HepG2 (cell line): ENCODE measurements at regions of chr2 and their contacts with region 1.

Region 1: GRCh38 chr2:38665854-38666555 is at the start of gene GALM:
- DNase-seq: peak; percentile 99
- ATAC-seq: peak; percentile 94
- H3K4me3 ChIP-seq: peak within 1 kb of the TSS; percentile 70 to 90 (median 85)
- H3K27ac ChIP-seq: peak within 1 kb of the TSS; percentile 88
- H3K4me1 ChIP-seq: peaks cover 52% of the 10 kb centered on the region
- H3K27me3 ChIP-seq: no peaks in the 10 kb centered on the region; a peak in 1 of 5 replicates
- CTCF ChIP-seq: 0 out of 2 replicates have a peak, but pooled peaks have one; percentile 15
- EP300 ChIP-seq: peak in 1 of 2 experiments; percentile 24; a peak in 2 of 4 replicates
- POLR2A ChIP-seq: peak; percentile 93 to 99
- RAD21 ChIP-seq: no peak
- total RNA-seq, gene GALM: 90.0 and 114 TPM in 2 replicates

Region 2: GRCh38 chr2:38610851-38611801 is 54.9 kb before region 1 on chr2:
- CTCF ChIA-PET with region 1: no interaction called
- POLR2A ChIA-PET with region 1: interaction called, 24 read pairs
- in situ Hi-C with region 1: no loop called
- intact Hi-C with region 1: no loop called
- DNase-seq: peak; percentile 95
- ATAC-seq: peak; percentile 93
- H3K4me3 ChIP-seq: peak overlapping the region in 1 of 3 experiments; percentile 17; a peak in 1 of 6 replicates
- H3K27ac ChIP-seq: peak overlapping the region; percentile 73
- H3K4me1 ChIP-seq: peaks cover 80% of the 10 kb centered on the region
- H3K27me3 ChIP-seq: no peaks in the 10 kb centered on the region
- CTCF ChIP-seq: 0 out of 2 replicates have a peak, but pooled peaks have one; percentile 5
- EP300 ChIP-seq: peak; percentile 35 to 95; a peak in 2 of 4 replicates
- POLR2A ChIP-seq: peak in 1 of 2 experiments; percentile 33; a peak in 1 of 4 replicates
- RAD21 ChIP-seq: no peak

Region 3: DNA sequence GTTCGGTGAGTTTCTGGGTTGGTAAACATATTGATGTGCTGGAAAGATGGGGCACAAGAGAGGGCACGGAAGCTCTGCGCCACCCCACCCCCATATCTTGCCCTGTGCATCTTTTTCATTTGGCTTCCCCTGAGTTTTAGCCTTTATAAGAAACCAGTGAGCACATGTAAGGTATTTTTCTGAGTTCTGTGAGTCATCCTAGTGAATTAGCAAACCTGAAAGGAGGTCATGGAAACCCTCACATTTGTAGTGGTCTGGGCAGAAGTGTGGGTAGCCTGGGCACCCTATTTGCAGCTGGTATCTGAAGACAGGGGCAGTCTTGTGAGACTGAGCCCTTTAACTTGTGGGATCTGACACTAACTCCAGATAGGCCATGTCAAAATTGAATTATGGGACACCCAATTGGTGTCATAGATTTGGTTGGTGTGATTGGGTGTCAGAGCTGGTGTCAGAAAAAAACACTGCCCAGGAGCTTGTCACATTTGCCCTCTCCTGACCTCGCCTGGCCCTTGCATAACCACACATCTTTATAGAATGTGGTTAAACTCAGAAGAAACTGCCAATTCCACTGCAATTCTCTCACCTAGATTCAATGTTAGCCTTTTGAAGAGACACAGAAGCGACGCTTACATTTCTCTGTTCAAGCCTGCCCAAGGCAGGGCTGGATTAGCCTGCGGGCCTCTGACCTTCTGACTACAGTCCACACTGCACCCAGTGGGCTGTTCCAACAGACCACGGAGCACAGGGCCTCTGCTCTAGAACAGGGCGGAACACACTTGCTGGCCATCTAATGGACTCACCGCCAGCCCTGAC is 12.1 kb before region 1 on chr2:
- CTCF ChIA-PET with region 1: no interaction called
- POLR2A ChIA-PET with region 1: interaction called, 30 read pairs
- in situ Hi-C with region 1: no loop called
- intact Hi-C with region 1: no loop called
- DNase-seq: peak; percentile 53
- ATAC-seq: peak; percentile 98
- H3K4me3 ChIP-seq: peak overlapping the region; percentile 29 to 67 (median 53)
- H3K27ac ChIP-seq: peak overlapping the region; percentile 42
- H3K4me1 ChIP-seq: peaks cover 48% of the 10 kb centered on the region
- H3K27me3 ChIP-seq: no peaks in the 10 kb centered on the region; a peak in 2 of 5 replicates
- CTCF ChIP-seq: no peak; the same call in 1 of the 2 replicates
- EP300 ChIP-seq: peak in 1 of 2 experiments; percentile 56; a peak in 1 of 4 replicates
- POLR2A ChIP-seq: peak; percentile 60 to 72
- RAD21 ChIP-seq: no peak; the same call in 1 of the 2 replicates

Region 4: DNA sequence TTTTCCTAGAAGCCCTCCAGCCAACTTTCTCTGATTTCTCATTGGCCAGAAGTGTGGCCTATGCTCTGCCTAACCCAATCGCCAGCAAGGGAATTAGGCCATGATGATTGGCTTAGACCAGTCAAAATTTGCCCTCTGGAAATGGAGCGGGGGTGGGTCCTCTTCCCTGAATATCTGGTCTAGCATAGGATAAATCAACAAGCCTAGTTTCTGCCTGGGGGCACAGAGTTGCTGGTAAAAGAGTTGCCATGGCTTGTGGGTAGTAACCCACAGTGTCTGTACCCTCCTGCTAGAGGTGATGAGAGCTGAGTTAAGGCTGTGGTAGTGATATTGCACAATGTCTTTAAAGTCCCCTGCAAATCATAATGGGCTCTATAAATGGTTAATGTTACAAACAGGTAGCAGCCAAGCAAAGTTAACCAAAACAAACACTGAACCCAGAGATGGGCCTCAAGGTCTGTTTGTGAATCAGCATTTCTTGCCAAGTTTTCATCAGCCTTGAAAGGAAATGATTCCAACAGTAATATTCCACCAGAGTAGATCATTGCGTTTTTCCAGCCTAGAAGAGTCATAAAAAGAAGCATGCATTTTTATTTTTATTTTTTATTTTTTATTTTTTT is 19.2 kb after region 1 on chr2:
- CTCF ChIA-PET with region 1: no interaction called
- POLR2A ChIA-PET with region 1: interaction called, 13 read pairs
- in situ Hi-C with region 1: no loop called
- intact Hi-C with region 1: no loop called
- DNase-seq: peak; percentile 87
- ATAC-seq: peak; percentile 81
- H3K4me3 ChIP-seq: peak overlapping the region in 1 of 3 experiments; percentile 3; a peak in 1 of 6 replicates
- H3K27ac ChIP-seq: peak overlapping the region; percentile 44
- H3K4me1 ChIP-seq: peaks cover 45% of the 10 kb centered on the region
- H3K27me3 ChIP-seq: no peaks in the 10 kb centered on the region
- CTCF ChIP-seq: no peak
- EP300 ChIP-seq: peak in 1 of 2 experiments; percentile 90; a peak in 2 of 4 replicates
- POLR2A ChIP-seq: no peak
- RAD21 ChIP-seq: no peak

Region 5: DNA sequence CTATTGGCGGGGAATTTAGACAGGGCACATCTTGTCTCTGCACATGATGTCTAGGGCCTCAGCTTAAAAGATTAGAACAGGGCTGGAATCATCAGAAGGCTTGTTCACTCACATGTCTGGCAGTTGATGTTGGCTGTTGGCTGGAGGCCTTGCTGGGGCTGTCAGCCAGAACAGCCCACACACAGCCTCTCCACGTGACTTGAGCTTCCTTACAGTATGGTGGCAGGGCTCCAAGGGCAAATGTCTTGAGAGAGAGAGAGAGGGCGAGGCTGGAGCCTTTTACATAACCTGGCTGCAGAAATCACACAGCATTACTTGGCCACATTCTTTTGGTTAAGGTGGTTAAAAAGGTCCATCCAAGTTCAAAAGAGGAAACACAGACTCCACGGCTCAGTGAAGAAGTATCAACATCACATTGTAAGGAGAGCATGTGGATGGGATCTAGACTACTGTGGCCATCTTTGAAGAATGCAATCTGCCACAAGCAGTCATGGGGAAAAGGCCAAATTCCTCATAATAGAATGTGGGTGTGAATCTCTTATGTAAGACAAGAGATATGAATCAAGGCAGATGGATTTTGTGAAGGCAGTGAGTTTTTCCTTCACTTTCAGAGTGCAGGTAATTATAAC is 54.7 kb after region 1 on chr2:
- CTCF ChIA-PET with region 1: no interaction called
- POLR2A ChIA-PET with region 1: no interaction called
- in situ Hi-C with region 1: no loop called
- intact Hi-C with region 1: loop called (anchors 2 kb)
- DNase-seq: no peak
- ATAC-seq: no peak
- H3K4me3 ChIP-seq: no peak overlapping the region
- H3K27ac ChIP-seq: no peak overlapping the region
- H3K4me1 ChIP-seq: peaks cover 10% of the 10 kb centered on the region
- H3K27me3 ChIP-seq: no peaks in the 10 kb centered on the region
- CTCF ChIP-seq: no peak
- EP300 ChIP-seq: no peak
- POLR2A ChIP-seq: no peak
- RAD21 ChIP-seq: no peak

Region 6: DNA sequence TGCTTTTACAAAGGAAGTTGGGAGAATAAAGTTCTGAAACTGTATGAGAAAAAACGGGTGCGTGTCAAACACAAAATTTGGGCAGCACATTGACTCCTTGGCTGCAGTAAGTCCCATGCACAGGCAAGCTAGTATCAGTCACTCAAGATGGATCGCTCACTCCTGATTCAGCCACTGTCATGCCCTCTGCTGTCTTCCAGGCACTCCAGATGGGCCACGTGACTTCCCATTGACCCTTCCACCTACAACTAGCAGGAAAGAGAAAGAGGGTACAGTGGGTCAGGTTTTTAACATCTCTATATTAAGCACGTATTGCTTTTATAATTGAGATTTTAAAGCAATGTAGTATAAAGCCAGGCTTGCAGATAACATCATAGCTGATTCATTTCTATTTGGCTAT is 232.3 kb after region 1 on chr2:
- CTCF ChIA-PET with region 1: no interaction called
- POLR2A ChIA-PET with region 1: no interaction called
- in situ Hi-C with region 1: no loop called
- intact Hi-C with region 1: no loop called
- DNase-seq: no peak
- ATAC-seq: no peak
- H3K4me3 ChIP-seq: no peak overlapping the region
- H3K27ac ChIP-seq: no peak overlapping the region
- H3K4me1 ChIP-seq: 0 out of 2 replicates have a peak, but pooled peaks cover 5% of the 10 kb centered on the region
- H3K27me3 ChIP-seq: peaks cover 0 to 10% of the 10 kb centered on the region in 2 experiments; a peak in 1 of 5 replicates
- CTCF ChIP-seq: no peak
- EP300 ChIP-seq: no peak
- POLR2A ChIP-seq: no peak
- RAD21 ChIP-seq: no peak